Activated T-helper 1 cell treated with anti-CD3 and anti-CD28 coated beads, Interleukin-12 subunit alpha, Interleukin-12 subunit beta, Interleukin-2, Interleukin-4 antibody, amounts not matched to agents 30 ng/mL and 10 ng/mL and 1 ng/mL, durations not matched to agents 14 hours and 24 hours and 36 hours (primary cell): ENCODE measurements at regions of chrX and their contacts with region 1.

Region 1: GRCh38 chrX:100768679-100769338 is 36.9 kb upstream of the SYTL4 start:
- DNase-seq: peak; percentile 60
- H3K4me3 Mint-ChIP-seq: no peak overlapping the region
- H3K27ac Mint-ChIP-seq: no peak overlapping the region
- H3K4me1 Mint-ChIP-seq: no peaks in the 10 kb centered on the region
- H3K27me3 Mint-ChIP-seq: peaks cover 20% of the 10 kb centered on the region

Region 2: GRCh38 chrX:100368167-100368566 is 400.6 kb before region 1 on chrX:
- intact Hi-C with region 1: no loop called
- DNase-seq: no peak
- H3K4me3 Mint-ChIP-seq: no peak overlapping the region
- H3K27ac Mint-ChIP-seq: no peak overlapping the region
- H3K4me1 Mint-ChIP-seq: no peaks in the 10 kb centered on the region
- H3K27me3 Mint-ChIP-seq: peaks cover 1% of the 10 kb centered on the region

Region 3: DNA sequence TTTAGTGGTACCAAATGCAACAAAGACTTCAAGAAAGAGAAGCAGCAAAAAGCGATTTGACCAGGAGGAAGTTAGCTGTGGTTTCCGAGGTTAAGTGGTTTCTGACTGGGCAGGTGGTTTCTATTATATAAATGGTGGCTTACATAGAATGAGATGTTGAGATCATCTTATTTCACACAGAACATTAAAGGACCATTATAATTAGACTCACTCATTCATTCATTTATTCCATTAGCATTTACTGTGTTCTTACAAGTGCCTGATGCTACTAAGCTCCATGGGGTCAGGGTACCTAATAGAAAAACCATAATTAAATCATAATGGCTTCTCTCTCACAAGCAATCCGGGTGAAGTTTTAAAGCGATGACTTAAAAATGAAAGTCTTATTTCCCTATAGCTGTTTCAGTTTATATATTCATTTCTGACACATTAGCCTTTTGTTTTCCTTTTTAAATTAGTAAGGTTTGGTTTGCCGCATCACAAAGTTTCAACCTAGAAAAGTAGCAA is 142.8 kb before region 1 on chrX:
- intact Hi-C with region 1: no loop called
- DNase-seq: no peak
- H3K4me3 Mint-ChIP-seq: no peak overlapping the region
- H3K27ac Mint-ChIP-seq: no peak overlapping the region
- H3K4me1 Mint-ChIP-seq: peaks cover 8% of the 10 kb centered on the region
- H3K27me3 Mint-ChIP-seq: peaks cover 2% of the 10 kb centered on the region

Region 4: GRCh38 chrX:100674705-100675104 is 94.1 kb before region 1 on chrX:
- intact Hi-C with region 1: loop called (anchors 1 kb)
- DNase-seq: no peak
- H3K4me3 Mint-ChIP-seq: no peak overlapping the region
- H3K27ac Mint-ChIP-seq: no peak overlapping the region
- H3K4me1 Mint-ChIP-seq: no peaks in the 10 kb centered on the region
- H3K27me3 Mint-ChIP-seq: peaks cover 7% of the 10 kb centered on the region

Region 5: DNA sequence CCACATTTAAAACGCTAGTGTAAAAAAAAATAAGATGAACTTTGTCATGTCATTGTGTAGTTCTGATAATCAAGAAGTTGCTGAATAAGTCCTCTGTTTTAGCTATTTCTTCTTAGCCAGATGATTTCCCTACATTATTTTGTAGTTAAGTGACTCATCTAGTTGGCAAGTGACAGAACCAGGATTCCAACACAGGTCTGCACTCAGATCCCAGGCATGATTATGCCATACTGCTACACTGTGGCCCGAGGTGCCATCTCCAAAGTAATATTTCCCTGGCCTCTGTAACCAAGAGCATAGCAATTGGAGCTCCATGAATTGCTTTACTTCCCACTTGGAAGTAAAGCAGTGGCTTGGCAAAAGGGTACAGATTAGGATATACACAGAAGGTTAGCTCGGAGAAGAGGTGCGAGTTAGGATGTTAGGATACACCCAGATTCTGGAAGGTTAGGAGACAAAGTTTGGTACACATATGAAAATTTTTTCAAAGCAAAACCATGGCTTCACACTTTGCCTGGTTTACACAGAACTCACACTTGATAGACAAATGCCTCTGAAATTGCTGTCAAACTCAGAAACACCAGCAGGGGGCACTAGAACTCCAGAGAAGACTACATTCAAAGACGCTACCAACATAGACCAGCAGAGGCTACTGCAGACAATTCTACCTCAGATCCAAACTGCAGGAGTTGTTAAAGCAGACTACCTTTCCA is 83.4 kb before region 1 on chrX:
- intact Hi-C with region 1: loop called (anchors 1 kb)
- DNase-seq: peak; percentile 35
- H3K4me3 Mint-ChIP-seq: no peak overlapping the region
- H3K27ac Mint-ChIP-seq: no peak overlapping the region
- H3K4me1 Mint-ChIP-seq: peaks cover 12% of the 10 kb centered on the region
- H3K27me3 Mint-ChIP-seq: no peaks in the 10 kb centered on the region